Activated CD8-positive, alpha-beta T cell treated with anti-CD3 and anti-CD28 coated beads, Interleukin-2, amount 10 ng/mL, durations not matched to agents 7 days and 5 days (primary cell): ENCODE measurements at regions of chr17 and their contacts with region 1.

Region 1: GRCh38 chr17:59331129-59331928 is at the start of gene YPEL2:
- DNase-seq: peak; percentile 89
- ATAC-seq: peak; percentile 92
- H3K4me3 Mint-ChIP-seq: peak within 1 kb of the TSS; percentile 88
- H3K27ac Mint-ChIP-seq: peak within 1 kb of the TSS; percentile 86
- H3K4me1 Mint-ChIP-seq: peaks cover 59% of the 10 kb centered on the region
- H3K27me3 Mint-ChIP-seq: peaks cover 3% of the 10 kb centered on the region
- total RNA-seq, gene YPEL2: 9.0 to 10.0 TPM

Region 2: DNA sequence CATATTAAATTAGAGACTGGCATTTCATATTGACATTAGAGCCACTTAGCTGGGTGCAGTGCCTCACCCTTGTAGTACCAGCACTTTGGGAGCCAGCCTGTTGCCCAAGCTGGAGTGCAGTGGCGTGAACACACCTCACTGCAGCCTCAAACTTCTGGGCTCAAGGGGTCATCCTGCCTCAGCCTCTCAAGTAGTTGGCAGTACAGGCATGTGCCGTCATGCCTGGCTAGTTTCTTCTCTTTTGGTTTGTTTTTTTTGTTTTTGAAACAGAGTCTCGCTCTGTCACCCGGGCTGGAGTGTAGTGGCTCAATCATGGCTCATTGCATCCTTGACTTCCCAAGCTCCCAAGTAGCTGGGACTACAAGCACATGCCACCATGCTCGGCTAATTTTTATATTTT is 567.0 kb before region 1 on chr17:
- CTCF ChIA-PET with region 1: no interaction called
- POLR2A ChIA-PET with region 1: no interaction called
- DNase-seq: no peak
- ATAC-seq: no peak
- H3K4me3 Mint-ChIP-seq: no peak overlapping the region
- H3K27ac Mint-ChIP-seq: no peak overlapping the region
- H3K4me1 Mint-ChIP-seq: no peaks in the 10 kb centered on the region
- H3K27me3 Mint-ChIP-seq: peaks cover 33% of the 10 kb centered on the region

Region 3: GRCh38 chr17:59342681-59343131 is 11.4 kb after region 1 on chr17:
- CTCF ChIA-PET with region 1: interaction called, 12 read pairs
- POLR2A ChIA-PET with region 1: interaction called, 4 read pairs
- DNase-seq: no peak
- ATAC-seq: peak; percentile 68
- H3K4me3 Mint-ChIP-seq: no peak overlapping the region
- H3K27ac Mint-ChIP-seq: peak overlapping the region; percentile 70
- H3K4me1 Mint-ChIP-seq: peaks cover 29% of the 10 kb centered on the region
- H3K27me3 Mint-ChIP-seq: no peaks in the 10 kb centered on the region

Region 4: GRCh38 chr17:59372138-59372857 is 41.0 kb after region 1 on chr17:
- CTCF ChIA-PET with region 1: interaction called, 22 read pairs
- POLR2A ChIA-PET with region 1: interaction called, 3 read pairs
- DNase-seq: no peak
- ATAC-seq: peak; percentile 45
- H3K4me3 Mint-ChIP-seq: no peak overlapping the region
- H3K27ac Mint-ChIP-seq: peak overlapping the region; percentile 69
- H3K4me1 Mint-ChIP-seq: peaks cover 63% of the 10 kb centered on the region
- H3K27me3 Mint-ChIP-seq: no peaks in the 10 kb centered on the region

Region 5: DNA sequence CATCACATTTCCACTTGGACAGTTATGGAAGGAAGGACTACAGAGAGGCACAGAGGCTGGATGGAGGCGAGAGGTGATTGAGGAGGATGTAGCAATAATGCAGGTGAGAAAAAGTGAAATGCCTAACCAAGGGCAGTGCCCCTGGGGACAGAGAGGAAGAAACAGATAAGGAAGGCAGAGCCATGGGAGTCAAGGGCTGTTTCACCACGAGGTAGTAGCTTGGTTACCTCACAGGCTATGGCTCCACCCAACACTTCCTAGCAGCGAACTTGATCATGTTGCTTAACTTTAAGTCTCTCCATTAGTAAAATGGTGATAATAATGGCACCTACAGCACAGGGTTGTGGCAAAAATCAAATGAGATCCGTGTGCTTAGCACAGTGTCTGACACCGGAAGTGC is 84.1 kb after region 1 on chr17:
- CTCF ChIA-PET with region 1: interaction called, 17 read pairs
- POLR2A ChIA-PET with region 1: interaction called, 5 read pairs
- DNase-seq: no peak
- ATAC-seq: peak; percentile 9
- H3K4me3 Mint-ChIP-seq: no peak overlapping the region
- H3K27ac Mint-ChIP-seq: peak overlapping the region; percentile 83
- H3K4me1 Mint-ChIP-seq: peaks cover 64% of the 10 kb centered on the region
- H3K27me3 Mint-ChIP-seq: no peaks in the 10 kb centered on the region

Region 6: DNA sequence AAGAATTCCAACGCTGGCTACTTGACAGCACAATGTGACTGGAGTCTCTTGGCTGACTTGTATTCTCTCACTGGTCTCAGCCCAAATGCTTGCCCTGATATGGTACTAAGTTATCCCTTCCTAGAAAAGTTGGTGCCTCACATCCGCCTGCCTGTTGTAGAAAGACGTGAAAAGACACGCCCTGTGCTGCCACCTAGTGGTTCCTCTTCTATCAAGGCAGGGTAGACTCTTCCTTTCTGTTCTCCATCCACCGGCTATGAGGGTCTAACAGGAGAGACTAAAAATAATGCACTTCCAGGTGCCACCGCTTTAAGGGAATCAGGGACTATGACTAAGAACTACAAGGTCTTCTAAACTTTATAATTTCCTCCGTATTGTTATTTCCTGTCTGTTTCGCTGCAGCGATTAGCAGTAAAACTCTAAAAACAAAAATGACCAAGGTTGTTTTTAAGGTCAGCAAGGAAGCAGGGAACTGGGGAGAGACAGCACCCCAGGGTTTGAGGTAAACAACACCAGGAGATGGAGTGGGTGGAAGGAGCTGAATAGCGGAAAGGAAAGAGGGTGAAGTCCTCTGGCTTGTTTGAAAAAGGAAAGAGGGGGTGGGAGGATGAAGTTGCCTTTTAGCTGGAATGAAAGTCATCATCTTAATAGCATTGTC is 109.6 kb after region 1 on chr17:
- CTCF ChIA-PET with region 1: interaction called, 318 read pairs
- POLR2A ChIA-PET with region 1: interaction called, 22 read pairs
- DNase-seq: peak; percentile 96
- ATAC-seq: peak; percentile 99
- H3K4me3 Mint-ChIP-seq: peak overlapping the region; percentile 35
- H3K27ac Mint-ChIP-seq: peak overlapping the region; percentile 89
- H3K4me1 Mint-ChIP-seq: peaks cover 46% of the 10 kb centered on the region
- H3K27me3 Mint-ChIP-seq: no peaks in the 10 kb centered on the region